Activated CD4-positive, alpha-beta memory T cell treated with anti-CD3 and anti-CD28 coated beads for 36 hours (primary cell): ENCODE measurements at regions of chr1 and their contacts with region 1.

Region 1: DNA sequence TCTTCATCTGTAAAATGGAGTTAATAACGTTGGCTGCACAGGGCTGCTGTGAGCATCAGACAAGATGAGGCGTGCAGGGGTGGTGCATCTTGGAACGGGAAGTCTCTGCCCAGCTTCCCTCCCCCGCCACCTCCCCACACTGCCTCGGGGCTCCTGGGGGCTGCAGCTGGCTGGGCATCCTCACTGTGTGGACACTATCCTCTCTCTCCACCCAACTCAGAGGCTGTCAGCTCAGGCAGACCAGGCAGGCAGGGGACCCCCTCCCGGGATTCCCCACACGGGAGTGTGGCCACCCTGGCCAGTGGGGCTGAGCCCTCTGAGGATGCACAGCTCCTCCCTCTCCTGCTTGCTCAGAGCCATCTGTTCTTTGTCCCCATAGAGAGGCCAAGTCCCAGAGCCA is 122.7 kb downstream of the CCDC185 start:
- DNase-seq: peak; percentile 28
- H3K4me3 Mint-ChIP-seq: no peak overlapping the region
- H3K27ac Mint-ChIP-seq: peak overlapping the region; percentile 77
- H3K4me1 Mint-ChIP-seq: peaks cover 45% of the 10 kb centered on the region
- H3K27me3 Mint-ChIP-seq: no peaks in the 10 kb centered on the region

Region 2: DNA sequence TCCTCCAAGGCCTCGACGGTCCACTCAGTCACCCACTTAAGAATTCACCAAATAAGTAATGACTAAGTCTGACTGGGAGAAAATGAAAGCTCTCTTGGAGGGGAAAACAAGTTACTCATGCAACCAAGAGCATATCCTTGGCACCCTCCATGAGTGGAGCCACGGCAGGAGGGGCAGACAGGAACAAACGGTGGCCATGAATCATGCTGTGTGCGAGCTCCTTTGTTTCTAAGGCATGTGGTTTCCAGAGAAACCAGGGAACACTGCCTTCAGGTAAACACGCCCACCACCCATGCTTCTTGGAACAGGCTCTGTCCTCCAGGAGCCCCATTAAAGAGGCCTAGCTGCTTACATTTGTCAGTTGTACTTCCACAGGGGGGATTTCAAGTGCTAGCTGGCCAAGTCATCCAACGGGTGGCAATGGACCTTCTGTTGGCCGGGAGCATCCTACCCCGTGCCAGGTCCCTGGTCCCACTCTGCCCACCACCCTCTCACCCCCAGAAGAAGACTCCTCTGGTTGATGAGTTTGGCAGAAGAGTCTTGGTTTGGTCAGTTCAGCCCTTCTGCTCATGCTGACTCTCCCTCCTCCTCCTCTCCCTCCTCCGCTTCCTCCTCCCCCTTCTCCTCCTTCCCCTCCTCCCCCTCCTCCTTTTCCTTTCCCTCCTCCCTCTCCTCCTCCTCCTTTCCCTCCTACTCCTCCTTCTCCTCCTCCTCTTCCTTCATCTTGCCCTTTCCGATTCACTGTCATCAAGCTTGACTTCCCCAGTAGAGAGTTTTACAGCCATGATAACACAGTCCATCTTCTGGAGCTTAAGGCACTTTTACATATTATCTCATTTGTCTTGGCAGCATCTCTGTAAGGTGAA is 15.1 kb before region 1 on chr1:
- CTCF ChIA-PET with region 1: no interaction called
- POLR2A ChIA-PET with region 1: interaction called, 3 read pairs
- intact Hi-C with region 1: loop called (anchors 1 kb)
- DNase-seq: peak; percentile 66
- H3K4me3 Mint-ChIP-seq: no peak overlapping the region
- H3K27ac Mint-ChIP-seq: peak overlapping the region; percentile 25
- H3K4me1 Mint-ChIP-seq: peaks cover 11% of the 10 kb centered on the region
- H3K27me3 Mint-ChIP-seq: no peaks in the 10 kb centered on the region